ENCODE measurements at regions of chr2 and their contacts with region 1.

Region 1: DNA sequence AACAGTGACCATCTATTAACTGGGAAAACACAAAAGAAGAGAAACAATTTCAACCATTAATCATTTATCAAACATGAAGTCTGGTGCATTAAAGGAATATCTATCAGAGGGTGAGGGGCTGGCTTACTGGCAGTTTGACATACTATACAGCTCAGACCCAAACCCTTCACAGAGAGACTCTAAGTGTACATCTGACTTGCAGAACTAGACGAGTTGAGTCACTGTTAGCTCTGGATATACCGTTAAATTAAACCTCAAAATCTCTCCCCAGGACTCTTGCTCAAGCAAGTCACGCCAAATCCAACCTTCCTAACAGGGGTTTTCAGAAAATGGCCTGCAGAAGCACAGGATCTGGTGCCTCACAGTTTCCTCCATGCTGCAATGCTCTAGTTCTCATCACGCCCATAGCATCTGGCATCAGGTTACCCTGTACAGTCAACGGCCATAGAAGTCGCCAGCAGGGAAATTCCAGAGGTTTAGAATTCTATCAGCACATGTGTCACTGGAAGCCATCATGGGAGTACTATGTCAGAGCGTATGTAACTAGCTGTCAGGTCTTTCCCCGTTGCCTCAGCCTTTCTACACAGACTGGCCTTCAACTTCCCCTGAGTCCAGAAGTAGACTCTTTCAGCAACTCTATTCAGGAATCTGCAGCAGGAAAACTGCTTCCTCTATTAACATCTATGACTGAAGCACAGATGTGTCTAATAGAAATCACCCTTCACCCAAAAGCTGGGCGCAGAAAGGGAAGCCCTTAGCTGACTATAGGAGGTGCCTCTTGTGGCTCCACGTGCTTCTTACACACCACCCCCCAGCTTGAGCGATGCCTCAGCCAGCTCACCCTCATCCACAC is 9.3 kb downstream of the TGOLN2 start:
- DNase-seq: peak; percentile 91
- ATAC-seq: peak; percentile 72
- H3K4me3 ChIP-seq: no peak overlapping the region
- H3K27ac ChIP-seq: 0 out of 2 replicates have a peak overlapping the region, but pooled peaks have one; percentile 4
- H3K4me1 ChIP-seq: peaks cover 10% of the 10 kb centered on the region
- H3K27me3 ChIP-seq: no peaks in the 10 kb centered on the region
- CTCF ChIP-seq: no peak
- POLR2A ChIP-seq: no peak
- RAD21 ChIP-seq: no peak

Region 2: DNA sequence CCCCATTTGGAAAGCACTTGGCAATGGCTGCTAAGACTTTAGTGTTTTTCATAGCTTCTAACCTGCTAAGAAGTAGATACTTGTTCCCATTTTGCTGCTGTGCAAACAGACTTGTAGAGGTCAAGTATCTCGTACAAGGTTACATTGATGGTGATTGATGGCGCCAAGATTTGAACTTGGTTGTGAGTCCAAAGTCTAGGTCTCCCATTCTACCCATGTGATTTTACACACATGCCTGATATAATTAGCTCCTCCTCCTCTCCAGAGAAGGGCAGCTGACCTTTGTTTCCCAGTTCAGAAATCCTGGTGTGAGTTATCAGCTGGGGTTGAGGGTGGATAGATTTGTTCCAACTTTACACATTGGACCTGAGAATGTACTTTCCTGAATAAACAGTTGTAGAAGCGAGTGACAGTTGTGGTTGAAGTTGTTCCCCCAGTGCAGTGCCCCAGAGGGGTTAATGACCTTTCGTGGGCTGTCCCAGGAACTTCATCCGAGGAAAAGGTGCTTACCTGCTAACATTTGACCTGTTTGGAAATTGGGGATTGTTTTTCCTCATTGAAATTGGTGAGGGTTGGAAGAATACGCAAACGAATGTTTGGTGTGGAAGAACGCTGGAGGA is 174.9 kb before region 1 on chr2:
- CTCF ChIA-PET with region 1: no interaction called
- POLR2A ChIA-PET with region 1: no interaction called
- dilution Hi-C with region 1: no loop called
- in situ Hi-C with region 1: no loop called
- intact Hi-C with region 1: no loop called
- DNase-seq: no peak
- ATAC-seq: no peak
- H3K4me3 ChIP-seq: no peak overlapping the region
- H3K27ac ChIP-seq: no peak overlapping the region
- H3K4me1 ChIP-seq: no peaks in the 10 kb centered on the region; the same call in 1 of the 2 replicates
- H3K27me3 ChIP-seq: no peaks in the 10 kb centered on the region
- CTCF ChIP-seq: no peak
- POLR2A ChIP-seq: no peak
- RAD21 ChIP-seq: no peak

Region 3: GRCh38 chr2:85340034-85340892 is 21.8 kb after region 1 on chr2:
- CTCF ChIA-PET with region 1: no interaction called
- POLR2A ChIA-PET with region 1: no interaction called
- dilution Hi-C with region 1: no loop called
- in situ Hi-C with region 1: no loop called
- intact Hi-C with region 1: loop called (anchors 2 kb)
- DNase-seq: no peak
- ATAC-seq: peak; percentile 56
- H3K4me3 ChIP-seq: no peak overlapping the region
- H3K27ac ChIP-seq: no peak overlapping the region
- H3K4me1 ChIP-seq: no peaks in the 10 kb centered on the region
- H3K27me3 ChIP-seq: peaks cover 6% of the 10 kb centered on the region
- CTCF ChIP-seq: no peak
- POLR2A ChIP-seq: no peak
- RAD21 ChIP-seq: no peak